Activated naive CD4-positive, alpha-beta T cell treated with anti-CD3 and anti-CD28 coated beads for 36 hours (primary cell): ENCODE measurements at regions of chr1 and their contacts with region 1.

Region 1: GRCh38 chr1:213852107-213852506 is 135.7 kb upstream of the PROX1 start:
- DNase-seq: peak; percentile 54
- H3K4me3 Mint-ChIP-seq: no peak overlapping the region
- H3K27ac Mint-ChIP-seq: no peak overlapping the region
- H3K4me1 Mint-ChIP-seq: peaks cover 25% of the 10 kb centered on the region
- H3K27me3 Mint-ChIP-seq: no peaks in the 10 kb centered on the region

Region 2: GRCh38 chr1:213669964-213670691 is 182.0 kb before region 1 on chr1:
- CTCF ChIA-PET with region 1: no interaction called
- intact Hi-C with region 1: loop called (anchors 1 kb)
- DNase-seq: peak; percentile 49
- H3K4me3 Mint-ChIP-seq: no peak overlapping the region
- H3K27ac Mint-ChIP-seq: no peak overlapping the region
- H3K4me1 Mint-ChIP-seq: peaks cover 14% of the 10 kb centered on the region
- H3K27me3 Mint-ChIP-seq: no peaks in the 10 kb centered on the region

Region 3: DNA sequence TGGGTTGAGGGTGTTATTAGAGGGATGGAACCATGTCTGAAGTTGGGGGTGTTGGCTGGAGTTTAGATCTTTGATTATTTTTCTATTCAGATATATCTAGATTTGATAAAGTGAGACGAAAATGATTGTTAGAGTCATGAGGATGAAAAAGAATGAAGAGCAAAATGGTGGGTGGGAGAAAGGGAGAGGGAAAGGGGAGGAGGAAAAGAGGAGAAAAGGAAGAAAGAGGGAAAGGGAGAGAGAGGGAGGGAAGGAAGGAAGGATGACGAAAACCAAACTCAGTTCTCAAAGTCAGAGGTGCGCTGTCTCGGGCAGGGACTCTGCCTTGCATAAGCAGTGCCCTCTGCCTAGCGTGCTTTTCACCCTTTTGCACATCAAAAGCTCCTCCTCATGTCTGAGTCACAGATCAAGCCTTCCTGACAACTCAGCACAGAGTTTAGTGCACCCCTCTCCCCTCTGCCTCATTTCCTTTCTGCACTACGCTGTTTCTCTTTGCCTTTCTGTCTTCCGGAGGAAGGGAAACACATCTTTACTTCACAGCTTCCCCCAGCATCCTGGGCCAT is 90.2 kb before region 1 on chr1:
- CTCF ChIA-PET with region 1: no interaction called
- intact Hi-C with region 1: loop called (anchors 1 kb)
- DNase-seq: peak; percentile 81
- H3K4me3 Mint-ChIP-seq: peak overlapping the region; percentile 22
- H3K27ac Mint-ChIP-seq: peak overlapping the region; percentile 83
- H3K4me1 Mint-ChIP-seq: peaks cover 17% of the 10 kb centered on the region
- H3K27me3 Mint-ChIP-seq: no peaks in the 10 kb centered on the region

Region 4: DNA sequence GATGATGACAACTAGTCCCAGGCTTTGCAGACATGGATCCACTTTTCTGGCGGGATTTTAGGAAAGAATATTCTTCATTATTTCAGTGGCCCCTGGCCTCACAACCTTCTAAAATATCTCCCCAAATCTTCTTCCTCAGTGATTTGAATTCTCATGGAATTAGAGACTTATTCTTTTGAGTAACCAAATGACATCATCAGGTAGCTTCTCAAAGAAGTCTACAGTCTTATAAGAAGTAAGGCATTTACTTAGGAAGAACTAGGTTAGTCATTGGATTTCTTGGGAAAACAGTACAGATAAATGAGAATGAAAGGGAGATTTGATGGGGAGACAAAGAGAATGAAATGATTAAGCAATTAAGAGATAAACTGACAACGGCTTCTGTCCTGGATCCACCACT is 65.4 kb before region 1 on chr1:
- CTCF ChIA-PET with region 1: no interaction called
- intact Hi-C with region 1: loop called (anchors 5 kb)
- DNase-seq: no peak
- H3K4me3 Mint-ChIP-seq: no peak overlapping the region
- H3K27ac Mint-ChIP-seq: no peak overlapping the region
- H3K4me1 Mint-ChIP-seq: peaks cover 21% of the 10 kb centered on the region
- H3K27me3 Mint-ChIP-seq: peaks cover 3% of the 10 kb centered on the region

Region 5: GRCh38 chr1:213883618-213884017 is 31.5 kb after region 1 on chr1:
- CTCF ChIA-PET with region 1: no interaction called
- intact Hi-C with region 1: no loop called
- DNase-seq: peak; percentile 10
- H3K4me3 Mint-ChIP-seq: no peak overlapping the region
- H3K27ac Mint-ChIP-seq: no peak overlapping the region
- H3K4me1 Mint-ChIP-seq: peaks cover 11% of the 10 kb centered on the region
- H3K27me3 Mint-ChIP-seq: no peaks in the 10 kb centered on the region